Motor neuron (in vitro differentiated cells): ENCODE measurements at regions of chr2 and their contacts with region 1.

Region 1: DNA sequence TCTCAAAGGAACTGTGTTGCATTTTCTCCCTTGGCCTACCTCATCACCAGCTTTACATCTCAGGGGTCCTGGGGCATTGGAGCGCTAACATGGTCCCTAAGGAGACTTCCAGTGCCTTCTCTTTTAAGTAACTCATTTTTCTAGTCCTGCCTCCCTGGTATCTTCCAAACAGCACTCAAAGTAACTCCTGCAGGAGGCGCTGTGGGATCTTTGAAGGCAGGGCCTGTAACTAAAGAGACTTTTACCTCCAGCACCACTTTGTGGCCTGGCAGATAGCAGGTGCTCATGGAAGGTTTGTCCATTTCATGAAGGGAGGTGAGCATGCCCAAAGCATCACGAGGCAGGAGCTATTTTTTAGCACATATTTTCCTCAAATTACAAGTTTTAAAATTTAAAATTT is 411.0 kb upstream of the GYPC start:
- ATAC-seq: peak in 3 of 8 experiments; percentile 62 to 84 (median 74)
- H3K4me3 ChIP-seq: no peak overlapping the region
- H3K27ac ChIP-seq: no peak overlapping the region
- H3K4me1 ChIP-seq: peaks cover 5 to 11% of the 10 kb centered on the region in 2 donors

Region 2: DNA sequence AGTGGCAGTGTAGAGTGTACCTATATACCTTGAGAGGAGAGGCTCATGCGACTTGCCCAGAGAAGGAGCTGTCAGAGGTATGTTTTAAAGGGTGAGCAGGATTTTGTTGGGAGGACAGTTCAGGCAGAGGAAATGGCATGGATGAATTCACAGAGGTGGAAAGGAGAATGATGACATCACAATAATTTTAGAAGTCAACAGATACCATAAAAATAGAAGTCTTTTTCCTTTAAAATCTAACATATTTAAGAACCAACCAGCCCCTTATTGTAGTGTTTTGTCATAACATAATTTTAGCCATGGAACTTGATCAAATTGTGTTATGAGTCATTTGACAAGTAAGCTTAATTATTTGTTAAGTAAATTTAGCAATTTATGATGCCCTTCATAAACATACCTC is 127.0 kb before region 1 on chr2:
- in situ Hi-C with region 1: no loop called
- ATAC-seq: no peak
- H3K4me3 ChIP-seq: no peak overlapping the region
- H3K27ac ChIP-seq: no peak overlapping the region
- H3K4me1 ChIP-seq: peaks cover 0 to 6% of the 10 kb centered on the region in 2 donors

Region 3: GRCh38 chr2:126344493-126344892 is 99.6 kb after region 1 on chr2:
- in situ Hi-C with region 1: loop called in 1 of 9 experiments (anchors 25 kb)
- ATAC-seq: no peak
- H3K4me3 ChIP-seq: no peak overlapping the region
- H3K27ac ChIP-seq: no peak overlapping the region
- H3K4me1 ChIP-seq: no peaks in the 10 kb centered on the region

Region 4: GRCh38 chr2:126784028-126784427 is 539.1 kb after region 1 on chr2:
- in situ Hi-C with region 1: loop called in 2 of 9 experiments (anchors 10 to 25 kb)
- ATAC-seq: no peak
- H3K4me3 ChIP-seq: no peak overlapping the region
- H3K27ac ChIP-seq: no peak overlapping the region
- H3K4me1 ChIP-seq: peaks cover 3% of the 10 kb centered on the region in 2 donors

Region 5: DNA sequence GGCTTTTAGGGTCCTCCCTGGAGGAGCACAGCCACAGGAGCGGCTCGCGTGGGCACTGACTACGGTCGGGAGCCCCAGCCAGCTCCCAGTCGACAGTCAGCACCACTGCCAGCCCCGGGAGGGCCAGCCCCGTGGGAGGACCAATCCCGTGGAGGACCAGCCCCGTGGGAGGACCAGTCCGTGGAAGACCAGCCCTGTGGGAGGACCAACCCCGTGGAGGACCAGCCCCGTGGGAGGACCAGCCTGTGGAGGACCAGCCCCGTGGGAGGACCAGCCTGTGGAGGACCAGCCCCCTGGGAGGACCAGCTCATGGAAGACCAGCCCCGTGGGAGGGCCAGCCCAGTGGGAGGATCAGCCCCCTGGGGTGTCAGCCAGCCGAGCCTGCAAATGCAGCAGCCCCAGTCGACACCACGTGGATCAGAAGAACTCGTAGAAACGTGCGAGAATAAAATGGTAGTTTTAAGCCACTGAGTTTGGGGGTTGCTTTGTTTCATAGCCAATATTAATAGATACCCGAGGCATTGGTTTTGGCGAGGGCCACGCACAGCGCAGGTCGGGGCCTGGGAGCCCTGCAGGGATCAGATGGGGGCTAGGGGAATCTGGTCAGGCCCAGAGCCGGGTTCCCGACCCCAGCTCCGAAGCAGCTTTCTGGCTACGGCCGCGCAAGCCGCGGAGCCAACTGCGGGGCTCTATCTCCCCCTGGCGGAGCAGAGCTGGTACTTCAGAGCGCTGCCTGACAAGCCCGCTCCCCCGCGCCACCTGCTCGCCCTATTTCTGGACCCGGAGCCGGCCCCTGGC is 726.7 kb after region 1 on chr2:
- in situ Hi-C with region 1: loop called in 1 of 9 experiments (anchors 25 kb)
- ATAC-seq: peak; percentile 88 to 96 (median 94)
- H3K4me3 ChIP-seq: peak overlapping the region in 2 of 5 donors; percentile 17 to 19
- H3K27ac ChIP-seq: no peak overlapping the region
- H3K4me1 ChIP-seq: peaks cover 0 to 2% of the 10 kb centered on the region in 2 donors